ENCODE measurements at regions of chr2 and their contacts with region 1.

Region 1: DNA sequence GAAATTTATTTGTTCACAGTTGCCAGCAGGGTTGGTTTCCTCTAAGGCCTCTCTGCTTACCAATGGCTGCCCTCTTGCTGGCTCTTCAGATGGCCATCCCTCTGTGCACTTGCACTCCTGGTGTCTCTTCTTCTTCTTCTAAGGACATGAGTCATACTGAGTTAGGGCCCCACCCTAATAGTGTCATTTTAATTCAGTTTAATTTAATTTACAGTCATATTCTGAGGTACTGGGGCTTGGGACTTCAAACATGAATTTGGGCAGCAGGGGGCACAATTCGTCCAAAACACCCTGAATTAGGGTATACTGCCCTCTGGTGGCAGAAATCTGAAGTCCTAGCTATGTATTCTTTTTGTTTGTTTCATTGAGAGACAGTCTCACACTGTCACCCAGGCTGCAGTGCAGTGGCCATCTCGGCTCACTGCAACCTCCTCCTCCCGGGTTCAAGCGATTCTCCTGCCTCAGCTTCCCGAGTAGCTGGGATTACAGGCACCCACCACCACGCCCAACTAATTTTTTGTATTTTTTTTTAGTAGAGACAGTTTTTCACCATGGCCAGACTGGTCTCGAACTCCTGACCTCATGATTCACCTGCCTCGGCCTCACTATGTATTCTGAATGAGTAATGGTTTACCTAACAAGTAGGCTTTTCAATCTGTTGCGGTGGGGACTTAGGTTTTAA is 19.8 kb downstream of the SLC4A1AP start:
- DNase-seq: peak; percentile 84
- H3K4me3 ChIP-seq: no peak overlapping the region
- H3K27ac ChIP-seq: peak overlapping the region; percentile 73
- H3K4me1 ChIP-seq: peaks cover 47% of the 10 kb centered on the region
- H3K27me3 ChIP-seq: no peaks in the 10 kb centered on the region
- CTCF ChIP-seq: peak; percentile 93 to 95

Region 2: GRCh38 chr2:27638037-27638637 is 45.4 kb before region 1 on chr2:
- CTCF ChIA-PET with region 1: interaction called, 4 read pairs
- dilution Hi-C with region 1: no loop called
- in situ Hi-C with region 1: no loop called
- intact Hi-C with region 1: loop called (anchors 5 kb)
- DNase-seq: peak; percentile 97
- H3K4me3 ChIP-seq: no peak overlapping the region
- H3K27ac ChIP-seq: peak overlapping the region; percentile 94
- H3K4me1 ChIP-seq: peaks cover 29% of the 10 kb centered on the region
- H3K27me3 ChIP-seq: no peaks in the 10 kb centered on the region
- CTCF ChIP-seq: no peak

Region 3: GRCh38 chr2:28240937-28241336 is 557.4 kb after region 1 on chr2:
- CTCF ChIA-PET with region 1: interaction called, 17 read pairs
- dilution Hi-C with region 1: no loop called
- in situ Hi-C with region 1: no loop called
- intact Hi-C with region 1: no loop called
- DNase-seq: no peak
- H3K4me3 ChIP-seq: no peak overlapping the region
- H3K27ac ChIP-seq: no peak overlapping the region
- H3K4me1 ChIP-seq: no peaks in the 10 kb centered on the region
- H3K27me3 ChIP-seq: no peaks in the 10 kb centered on the region
- CTCF ChIP-seq: no peak